CD8-positive, alpha-beta T cell (primary cell): ENCODE measurements at regions of chr6 and their contacts with region 1.

Region 1: DNA sequence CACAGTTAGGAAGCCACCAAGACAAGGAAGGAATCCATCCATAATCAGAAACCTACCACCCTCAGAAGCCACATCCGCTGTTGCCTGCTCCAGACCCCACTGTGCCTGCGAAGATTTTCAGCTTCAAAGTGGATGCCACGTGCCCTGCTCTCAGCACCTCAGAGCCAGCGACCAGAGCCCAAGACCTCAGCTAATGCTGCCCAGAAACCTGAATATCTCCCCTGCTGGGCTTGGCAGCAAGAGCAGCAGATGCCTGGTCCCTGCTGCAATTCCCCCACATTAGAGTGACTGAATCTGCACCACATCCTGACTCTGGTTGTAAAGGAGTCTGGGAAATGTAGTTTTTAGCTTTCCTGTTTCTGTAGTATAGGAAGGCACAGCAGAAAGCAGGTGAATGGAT is 10.7 kb upstream of the ULBP3 start:
- DNase-seq: peak in 5 of 9 experiments; percentile 14 to 72 (median 48)
- ATAC-seq: peak; percentile 66
- H3K4me3 ChIP-seq: no peak overlapping the region
- H3K4me3 Mint-ChIP-seq: peak overlapping the region; percentile 6
- H3K27ac ChIP-seq: no peak overlapping the region
- H3K27ac Mint-ChIP-seq: no peak overlapping the region
- H3K4me1 ChIP-seq: peaks cover 21% of the 10 kb centered on the region
- H3K4me1 Mint-ChIP-seq: peaks cover 27% of the 10 kb centered on the region
- H3K27me3 ChIP-seq: peaks cover 0 to 4% of the 10 kb centered on the region in 2 experiments
- H3K27me3 Mint-ChIP-seq: peaks cover 18% of the 10 kb centered on the region
- CTCF ChIP-seq: no peak

Region 2: GRCh38 chr6:149823013-149823412 is 256.6 kb before region 1 on chr6:
- CTCF ChIA-PET with region 1: no interaction called
- POLR2A ChIA-PET with region 1: no interaction called
- intact Hi-C with region 1: no loop called
- DNase-seq: no peak
- ATAC-seq: no peak
- H3K4me3 ChIP-seq: no peak overlapping the region
- H3K4me3 Mint-ChIP-seq: no peak overlapping the region
- H3K27ac ChIP-seq: no peak overlapping the region
- H3K27ac Mint-ChIP-seq: no peak overlapping the region
- H3K4me1 ChIP-seq: no peaks in the 10 kb centered on the region
- H3K4me1 Mint-ChIP-seq: no peaks in the 10 kb centered on the region
- H3K27me3 ChIP-seq: no peaks in the 10 kb centered on the region
- H3K27me3 Mint-ChIP-seq: peaks cover 14% of the 10 kb centered on the region
- CTCF ChIP-seq: no peak

Region 3: DNA sequence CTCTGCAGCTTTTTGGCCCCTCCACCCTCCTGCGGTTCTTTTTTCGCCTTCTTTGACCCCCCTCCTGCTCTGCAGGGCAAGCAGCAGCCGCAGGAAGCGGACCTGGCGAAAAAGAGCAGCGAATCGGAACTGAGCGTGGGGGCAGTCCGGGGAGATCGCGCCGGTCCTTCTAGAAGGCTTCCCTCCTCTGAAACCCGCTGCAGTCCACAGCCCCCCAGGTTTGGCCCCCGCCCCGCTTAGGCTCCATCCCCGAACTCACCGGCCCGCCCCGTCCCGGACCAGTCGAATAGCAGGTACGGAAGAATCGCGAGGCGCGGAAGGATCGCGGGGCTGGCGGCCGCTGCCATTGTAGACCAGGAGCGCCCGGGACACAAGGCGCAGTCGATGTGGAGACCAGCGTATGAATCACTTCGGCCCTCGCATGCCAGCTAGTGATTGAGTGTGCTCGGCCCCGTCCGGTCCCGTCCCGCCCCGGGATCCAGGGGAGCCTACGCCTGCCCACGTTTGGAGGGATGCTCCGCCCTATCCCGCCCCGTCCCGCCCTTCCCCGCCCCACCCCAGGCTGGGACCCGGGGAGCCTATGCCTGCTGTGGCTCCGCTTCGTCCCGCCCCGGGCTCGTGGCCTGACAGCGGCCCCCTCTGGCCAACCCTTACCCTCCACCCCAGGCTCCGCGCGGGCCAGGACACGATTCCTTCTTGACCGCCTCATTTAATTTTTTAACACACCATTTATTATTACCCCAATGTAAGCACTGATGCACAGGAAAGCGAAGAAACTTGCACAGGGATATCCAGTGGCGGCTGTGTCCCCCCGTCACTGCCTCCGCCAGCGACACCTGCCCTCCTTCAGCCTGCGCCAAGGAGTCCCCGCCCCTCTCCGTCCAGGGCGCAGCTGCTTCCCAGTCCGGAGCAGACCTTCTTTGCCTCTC is 10.6 kb before region 1 on chr6 and contains the start of gene ULBP3:
- CTCF ChIA-PET with region 1: interaction called, 13 read pairs
- POLR2A ChIA-PET with region 1: no interaction called
- intact Hi-C with region 1: no loop called
- DNase-seq: peak; percentile 26 to 82 (median 62)
- ATAC-seq: peak; percentile 78
- H3K4me3 ChIP-seq: peak within 1 kb of the TSS; percentile 83 to 85
- H3K4me3 Mint-ChIP-seq: peak within 1 kb of the TSS; percentile 83
- H3K27ac ChIP-seq: no peak within 1 kb of the TSS
- H3K27ac Mint-ChIP-seq: no peak within 1 kb of the TSS
- H3K4me1 ChIP-seq: peaks cover 6% of the 10 kb centered on the region
- H3K4me1 Mint-ChIP-seq: peaks cover 14% of the 10 kb centered on the region
- H3K27me3 ChIP-seq: peaks cover 0 to 3% of the 10 kb centered on the region in 2 experiments
- H3K27me3 Mint-ChIP-seq: peaks cover 7% of the 10 kb centered on the region
- CTCF ChIP-seq: no peak
- total RNA-seq, gene ULBP3: 1.5 to 1.8 TPM

Region 4: DNA sequence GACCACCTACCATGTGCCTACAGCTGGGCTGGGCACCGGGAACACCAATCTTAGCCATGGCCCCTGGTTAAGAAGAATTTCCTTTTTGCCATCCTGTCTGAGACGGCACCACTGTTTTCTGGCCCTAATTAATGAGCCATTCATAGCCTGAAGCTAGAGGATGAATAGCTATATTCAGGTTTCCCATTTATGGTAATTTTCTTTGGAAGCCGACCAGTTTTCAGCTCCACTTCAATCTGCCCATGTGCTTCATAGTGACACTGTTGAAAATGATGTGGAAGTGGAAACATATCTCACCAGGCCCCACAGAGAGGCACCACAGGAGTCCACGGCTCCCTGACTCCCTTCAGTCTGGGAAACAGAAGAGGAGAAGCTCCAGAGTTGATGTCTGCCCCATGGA is 11.9 kb after region 1 on chr6:
- CTCF ChIA-PET with region 1: interaction called, 18 read pairs
- POLR2A ChIA-PET with region 1: interaction called, 3 read pairs
- intact Hi-C with region 1: no loop called
- DNase-seq: no peak
- ATAC-seq: no peak
- H3K4me3 ChIP-seq: no peak overlapping the region
- H3K4me3 Mint-ChIP-seq: no peak overlapping the region
- H3K27ac ChIP-seq: no peak overlapping the region
- H3K27ac Mint-ChIP-seq: no peak overlapping the region
- H3K4me1 ChIP-seq: no peaks in the 10 kb centered on the region
- H3K4me1 Mint-ChIP-seq: peaks cover 3% of the 10 kb centered on the region
- H3K27me3 ChIP-seq: no peaks in the 10 kb centered on the region
- H3K27me3 Mint-ChIP-seq: peaks cover 11% of the 10 kb centered on the region
- CTCF ChIP-seq: no peak

Region 5: GRCh38 chr6:150334790-150335783 is 255.5 kb after region 1 on chr6:
- CTCF ChIA-PET with region 1: interaction called, 12 read pairs
- POLR2A ChIA-PET with region 1: no interaction called
- intact Hi-C with region 1: loop called (anchors 1 kb)
- DNase-seq: peak in 3 of 9 experiments; percentile 30 to 69 (median 62)
- ATAC-seq: no peak
- H3K4me3 ChIP-seq: no peak overlapping the region
- H3K4me3 Mint-ChIP-seq: no peak overlapping the region
- H3K27ac ChIP-seq: no peak overlapping the region
- H3K27ac Mint-ChIP-seq: no peak overlapping the region
- H3K4me1 ChIP-seq: no peaks in the 10 kb centered on the region
- H3K4me1 Mint-ChIP-seq: no peaks in the 10 kb centered on the region
- H3K27me3 ChIP-seq: no peaks in the 10 kb centered on the region
- H3K27me3 Mint-ChIP-seq: peaks cover 6% of the 10 kb centered on the region
- CTCF ChIP-seq: peak; percentile 59

Region 6: GRCh38 chr6:150395398-150396009 is 315.9 kb after region 1 on chr6:
- CTCF ChIA-PET with region 1: interaction called, 46 read pairs
- POLR2A ChIA-PET with region 1: no interaction called
- intact Hi-C with region 1: loop called (anchors 1 to 2 kb)
- DNase-seq: peak in 4 of 9 experiments; percentile 17 to 65 (median 39)
- ATAC-seq: peak; percentile 34
- H3K4me3 ChIP-seq: no peak overlapping the region
- H3K4me3 Mint-ChIP-seq: no peak overlapping the region
- H3K27ac ChIP-seq: no peak overlapping the region
- H3K27ac Mint-ChIP-seq: no peak overlapping the region
- H3K4me1 ChIP-seq: no peaks in the 10 kb centered on the region
- H3K4me1 Mint-ChIP-seq: no peaks in the 10 kb centered on the region
- H3K27me3 ChIP-seq: peaks cover 0 to 2% of the 10 kb centered on the region in 2 experiments
- H3K27me3 Mint-ChIP-seq: peaks cover 12% of the 10 kb centered on the region
- CTCF ChIP-seq: peak; percentile 51

Region 7: GRCh38 chr6:150813319-150813992 is 733.9 kb after region 1 on chr6:
- CTCF ChIA-PET with region 1: interaction called, 10 read pairs
- POLR2A ChIA-PET with region 1: interaction called, 4 read pairs
- intact Hi-C with region 1: loop called (anchors 1 to 2 kb)
- DNase-seq: peak in 4 of 9 experiments; percentile 8 to 64 (median 38)
- ATAC-seq: peak; percentile 46
- H3K4me3 ChIP-seq: no peak overlapping the region
- H3K4me3 Mint-ChIP-seq: no peak overlapping the region
- H3K27ac ChIP-seq: peak overlapping the region in 1 of 2 experiments; percentile 19
- H3K27ac Mint-ChIP-seq: no peak overlapping the region
- H3K4me1 ChIP-seq: no peaks in the 10 kb centered on the region
- H3K4me1 Mint-ChIP-seq: peaks cover 4% of the 10 kb centered on the region
- H3K27me3 ChIP-seq: no peaks in the 10 kb centered on the region
- H3K27me3 Mint-ChIP-seq: peaks cover 7% of the 10 kb centered on the region
- CTCF ChIP-seq: no peak